Right lobe of liver (tissue), 6 donors: ENCODE measurements at regions of chr10 and their contacts with region 1.

Region 1: GRCh38 chr10:110805350-110805749 is 66.4 kb upstream of the PDCD4 start:
- DNase-seq: no peak
- ATAC-seq: no peak
- H3K4me3 ChIP-seq: no peak overlapping the region
- H3K27ac ChIP-seq: no peak overlapping the region
- H3K4me1 ChIP-seq: peaks cover 0 to 22% (median 7%) of the 10 kb centered on the region in 4 donors
- H3K27me3 ChIP-seq: no peaks in the 10 kb centered on the region
- CTCF ChIP-seq: no peak
- POLR2A ChIP-seq: no peak

Region 2: DNA sequence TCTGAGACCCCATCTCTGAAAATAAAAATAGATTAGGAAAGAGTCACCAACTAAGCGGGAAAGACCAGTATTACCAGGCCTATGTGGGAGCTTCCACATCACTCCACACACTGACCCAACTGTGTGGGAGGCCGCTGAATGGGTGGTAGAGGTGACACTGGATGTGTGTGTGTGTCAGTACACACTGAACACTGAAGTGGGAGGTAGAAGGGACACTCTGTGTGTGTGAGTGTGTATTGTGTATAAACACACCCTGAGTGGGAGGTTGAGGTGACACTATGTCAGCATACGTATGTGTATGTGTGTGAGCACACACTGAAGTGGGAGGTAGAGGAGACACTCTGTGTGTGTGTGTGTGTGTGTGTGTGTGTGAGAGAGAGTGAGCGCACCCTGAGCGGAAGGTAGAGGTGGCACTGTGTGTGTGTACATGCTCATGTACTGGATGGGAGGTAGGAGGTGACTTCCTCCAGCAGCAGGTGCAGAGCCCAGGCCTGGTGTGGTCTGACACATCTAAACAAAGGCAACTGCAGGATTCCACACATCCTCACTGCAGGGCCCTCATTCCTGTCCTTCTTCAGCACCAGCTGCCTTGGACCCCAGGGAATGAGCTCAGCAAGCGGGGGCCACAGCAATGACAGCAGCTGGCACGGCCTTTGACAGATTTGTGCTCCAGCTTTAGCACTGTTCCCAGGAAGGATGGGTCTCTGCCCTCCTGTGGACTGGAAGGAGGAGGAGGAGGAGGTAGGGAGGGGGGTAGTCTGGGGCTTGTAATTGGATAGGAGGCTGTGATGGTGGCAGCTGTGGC is 187.7 kb before region 1 on chr10:
- intact Hi-C with region 1: no loop called
- DNase-seq: no peak
- ATAC-seq: no peak
- H3K4me3 ChIP-seq: no peak overlapping the region
- H3K27ac ChIP-seq: no peak overlapping the region
- H3K4me1 ChIP-seq: no peaks in the 10 kb centered on the region
- H3K27me3 ChIP-seq: no peaks in the 10 kb centered on the region
- CTCF ChIP-seq: no peak
- POLR2A ChIP-seq: no peak

Region 3: DNA sequence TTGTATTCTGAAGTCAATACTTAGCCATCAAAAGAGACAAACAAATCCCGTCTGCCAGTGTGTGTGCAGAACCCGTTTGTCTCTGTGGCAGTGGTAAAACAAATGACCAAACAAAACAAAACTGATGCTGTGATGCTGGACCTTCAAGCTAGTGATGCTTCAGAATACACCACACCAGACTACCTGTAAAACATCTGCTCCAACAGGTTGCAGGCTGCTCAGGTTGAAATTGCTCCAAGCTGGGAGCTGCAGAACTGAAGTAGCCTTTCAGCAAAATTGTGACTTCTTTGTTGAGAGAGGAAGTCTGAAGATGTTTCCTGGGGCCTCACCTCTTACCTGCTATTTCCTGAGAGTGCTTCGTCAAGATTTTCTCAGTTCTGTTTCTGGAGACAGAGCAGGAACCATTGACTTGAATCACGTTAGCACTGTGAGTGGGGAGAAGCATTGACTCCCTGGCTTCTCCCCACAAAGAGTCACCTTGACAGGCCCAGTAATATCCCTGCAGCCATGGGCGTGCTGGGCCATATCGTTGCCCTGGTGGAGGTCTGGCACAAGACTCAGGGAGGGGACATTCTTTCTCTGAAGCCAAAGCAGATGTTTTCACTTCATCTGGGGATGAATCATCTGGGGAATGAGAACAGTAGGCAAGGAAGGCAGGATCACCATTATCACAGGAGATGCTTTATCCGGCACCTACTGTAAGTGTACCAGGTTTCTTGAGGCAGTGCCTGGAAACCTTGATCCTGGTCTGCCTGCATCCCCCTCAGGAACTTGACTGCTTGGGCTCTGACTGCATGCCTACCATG is 81.0 kb before region 1 on chr10:
- intact Hi-C with region 1: no loop called
- DNase-seq: no peak
- ATAC-seq: no peak
- H3K4me3 ChIP-seq: no peak overlapping the region
- H3K27ac ChIP-seq: peak overlapping the region in 1 of 3 donors; percentile 44
- H3K4me1 ChIP-seq: peaks cover 0 to 26% (median 0%) of the 10 kb centered on the region in 4 donors
- H3K27me3 ChIP-seq: no peaks in the 10 kb centered on the region
- CTCF ChIP-seq: no peak
- POLR2A ChIP-seq: no peak

Region 4: GRCh38 chr10:110857265-110858158 is 52.2 kb after region 1 on chr10:
- intact Hi-C with region 1: no loop called
- DNase-seq: peak in 1 of 3 donors; percentile 83
- ATAC-seq: peak; percentile 76 to 93 (median 85)
- H3K4me3 ChIP-seq: no peak overlapping the region
- H3K27ac ChIP-seq: peak overlapping the region; percentile 44 to 81 (median 58)
- H3K4me1 ChIP-seq: peaks cover 0 to 47% (median 26%) of the 10 kb centered on the region in 4 donors
- H3K27me3 ChIP-seq: no peaks in the 10 kb centered on the region
- CTCF ChIP-seq: no peak
- POLR2A ChIP-seq: no peak

Region 5: GRCh38 chr10:110893559-110894179 is 88.3 kb after region 1 on chr10:
- intact Hi-C with region 1: loop called in 1 of 2 experiments (anchors 5 kb)
- DNase-seq: no peak
- ATAC-seq: peak; percentile 82 to 88 (median 86)
- H3K4me3 ChIP-seq: no peak overlapping the region
- H3K27ac ChIP-seq: no peak overlapping the region
- H3K4me1 ChIP-seq: peaks cover 0 to 8% (median 0%) of the 10 kb centered on the region in 4 donors
- H3K27me3 ChIP-seq: no peaks in the 10 kb centered on the region
- CTCF ChIP-seq: peak; percentile 63 to 68 (median 66)
- POLR2A ChIP-seq: no peak